ENCODE measurements at regions of chr19 and their contacts with region 1.

Region 1: DNA sequence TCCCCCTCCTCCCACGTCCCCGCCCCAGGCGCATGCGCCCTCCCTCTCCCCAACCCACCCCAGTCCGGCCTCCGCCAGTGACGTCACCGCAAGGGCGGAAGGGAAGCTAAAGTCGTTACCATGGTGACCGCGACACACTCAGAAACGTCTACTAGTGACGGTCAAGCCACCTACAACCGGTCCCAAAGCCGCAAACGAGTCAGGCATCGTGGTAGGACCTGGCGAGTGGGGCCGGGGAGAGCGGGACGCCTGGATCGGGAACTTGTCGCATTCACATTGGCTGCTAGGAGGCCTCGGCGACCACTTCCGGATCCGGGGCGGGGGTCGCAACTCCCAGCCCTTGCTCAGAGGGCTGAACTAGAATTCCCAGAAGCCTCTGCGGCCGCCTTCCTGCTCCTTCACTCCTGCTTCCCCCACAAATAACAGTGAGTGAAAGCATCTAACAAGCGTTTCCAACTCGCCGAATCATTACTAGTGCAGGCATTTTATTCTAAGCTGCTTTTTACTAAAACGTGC is at the start of gene ZSCAN5A:
- DNase-seq: peak; percentile 98
- H3K4me3 Mint-ChIP-seq: peak within 1 kb of the TSS; percentile 91
- H3K27ac Mint-ChIP-seq: peak within 1 kb of the TSS; percentile 97
- H3K4me1 Mint-ChIP-seq: peaks cover 23% of the 10 kb centered on the region
- H3K27me3 Mint-ChIP-seq: no peaks in the 10 kb centered on the region
- total RNA-seq, gene ZSCAN5A: 4.5 to 5.2 TPM

Region 2: DNA sequence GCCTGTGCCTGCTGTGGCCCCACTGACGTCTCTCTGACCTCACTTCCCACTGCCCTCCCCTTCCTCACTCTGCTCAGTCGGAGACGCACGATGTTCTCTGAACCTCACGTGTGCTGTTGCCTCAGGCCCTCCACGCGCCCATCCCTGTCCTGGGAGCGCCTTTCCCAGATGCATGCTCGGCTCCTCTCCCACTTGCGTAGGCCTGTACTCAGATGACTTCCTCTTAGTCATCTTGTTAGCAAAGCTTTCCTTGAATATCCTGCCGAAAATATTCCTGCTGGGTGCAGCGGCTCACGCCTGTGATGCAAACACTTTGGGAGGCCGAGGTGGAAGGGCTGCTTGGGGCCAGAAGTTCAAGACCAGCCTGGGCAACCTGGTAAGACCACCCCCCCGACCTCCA is 1125.2 kb before region 1 on chr19:
- CTCF ChIA-PET with region 1: no interaction called
- POLR2A ChIA-PET with region 1: no interaction called
- intact Hi-C with region 1: no loop called
- DNase-seq: no peak
- H3K4me3 Mint-ChIP-seq: no peak overlapping the region
- H3K27ac Mint-ChIP-seq: no peak overlapping the region
- H3K4me1 Mint-ChIP-seq: no peaks in the 10 kb centered on the region
- H3K27me3 Mint-ChIP-seq: peaks cover 11% of the 10 kb centered on the region

Region 3: GRCh38 chr19:56121180-56122167 is 193.1 kb before region 1 on chr19 and contains the start of gene ZNF787:
- CTCF ChIA-PET with region 1: no interaction called
- POLR2A ChIA-PET with region 1: interaction called, 9 read pairs
- intact Hi-C with region 1: loop called (anchors 1 kb)
- DNase-seq: peak; percentile 97
- H3K4me3 Mint-ChIP-seq: peak within 1 kb of the TSS; percentile 85
- H3K27ac Mint-ChIP-seq: peak within 1 kb of the TSS; percentile 91
- H3K4me1 Mint-ChIP-seq: peaks cover 39% of the 10 kb centered on the region
- H3K27me3 Mint-ChIP-seq: no peaks in the 10 kb centered on the region
- total RNA-seq, gene ZNF787: 25.3 to 25.5 TPM

Region 4: GRCh38 chr19:56252699-56253422 is 61.8 kb before region 1 on chr19:
- CTCF ChIA-PET with region 1: interaction called, 21 read pairs
- POLR2A ChIA-PET with region 1: no interaction called
- intact Hi-C with region 1: no loop called
- DNase-seq: peak; percentile 83
- H3K4me3 Mint-ChIP-seq: no peak overlapping the region
- H3K27ac Mint-ChIP-seq: no peak overlapping the region
- H3K4me1 Mint-ChIP-seq: peaks cover 5% of the 10 kb centered on the region
- H3K27me3 Mint-ChIP-seq: no peaks in the 10 kb centered on the region

Region 5: GRCh38 chr19:56333505-56333904 is 18.9 kb after region 1 on chr19:
- CTCF ChIA-PET with region 1: interaction called, 16 read pairs
- POLR2A ChIA-PET with region 1: no interaction called
- intact Hi-C with region 1: no loop called
- DNase-seq: peak; percentile 34
- H3K4me3 Mint-ChIP-seq: no peak overlapping the region
- H3K27ac Mint-ChIP-seq: no peak overlapping the region
- H3K4me1 Mint-ChIP-seq: no peaks in the 10 kb centered on the region
- H3K27me3 Mint-ChIP-seq: peaks cover 5% of the 10 kb centered on the region

Region 6: DNA sequence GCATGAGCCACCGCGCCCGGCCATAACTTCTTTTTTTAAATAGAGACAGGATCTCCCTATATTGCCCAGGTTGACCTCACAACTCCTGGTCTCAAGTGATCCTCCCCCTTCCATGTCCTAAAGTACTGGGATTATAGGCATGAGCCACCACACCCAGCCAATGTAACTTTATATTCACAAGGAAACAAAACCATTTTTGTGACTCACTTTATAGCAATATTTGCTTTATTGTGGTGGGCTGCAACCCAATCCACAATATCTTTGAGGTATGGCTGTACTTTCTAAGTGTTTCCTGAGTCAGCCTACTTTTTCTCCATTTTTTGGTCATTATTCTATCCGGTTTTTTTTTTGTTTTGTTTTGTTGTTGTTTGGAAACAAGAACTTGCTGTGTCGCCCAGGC is 838.3 kb after region 1 on chr19:
- CTCF ChIA-PET with region 1: no interaction called
- POLR2A ChIA-PET with region 1: no interaction called
- intact Hi-C with region 1: no loop called
- DNase-seq: no peak
- H3K4me3 Mint-ChIP-seq: no peak overlapping the region
- H3K27ac Mint-ChIP-seq: no peak overlapping the region
- H3K4me1 Mint-ChIP-seq: no peaks in the 10 kb centered on the region
- H3K27me3 Mint-ChIP-seq: no peaks in the 10 kb centered on the region

Region 7: DNA sequence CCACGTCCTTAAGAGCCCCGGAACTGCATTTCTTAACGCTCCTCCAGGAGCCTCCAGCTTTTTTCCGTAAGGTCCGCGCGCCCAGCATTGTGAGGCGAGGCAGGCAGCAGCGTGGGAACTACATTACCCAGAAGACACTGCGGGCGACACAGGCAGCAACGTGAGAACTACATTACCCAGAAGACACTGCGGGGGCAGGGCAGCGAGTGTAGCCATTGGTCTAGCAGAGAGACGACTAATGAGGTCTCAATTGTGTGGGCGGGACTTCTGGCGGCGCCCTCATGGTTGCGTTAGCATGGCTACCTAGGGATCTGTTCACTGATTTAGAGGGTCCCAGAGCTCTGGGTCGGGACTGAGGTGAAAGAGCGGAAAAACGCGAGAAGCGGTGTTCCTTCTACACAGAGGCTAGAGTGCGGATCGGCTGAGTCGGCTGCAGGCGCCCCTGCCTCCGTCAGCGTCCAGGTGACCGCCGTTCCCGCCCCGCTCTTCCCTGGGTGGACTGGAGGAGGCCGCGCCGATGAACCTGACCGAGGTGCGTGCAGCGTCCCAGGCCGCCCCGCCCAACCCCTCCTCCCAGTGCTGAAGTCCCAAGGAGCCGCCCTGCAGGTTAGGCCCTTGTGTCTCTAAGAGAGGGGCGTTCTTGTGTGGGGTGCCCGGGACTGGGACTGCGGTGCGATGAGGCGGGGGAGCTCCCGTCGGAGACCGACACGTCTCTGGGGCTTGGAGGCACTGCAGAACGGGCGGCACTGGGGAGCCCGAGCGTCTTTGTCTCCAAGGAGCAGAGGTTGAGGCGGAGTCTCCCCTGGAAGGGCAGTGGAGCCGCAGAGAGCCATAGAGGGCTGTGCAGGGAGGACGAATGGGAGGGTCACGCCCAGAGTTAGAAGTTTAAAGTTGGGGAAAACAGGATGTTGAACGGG is 1120.7 kb after region 1 on chr19 and contains the start of gene ZNF749:
- CTCF ChIA-PET with region 1: no interaction called
- POLR2A ChIA-PET with region 1: no interaction called
- intact Hi-C with region 1: loop called (anchors 5 kb)
- DNase-seq: peak; percentile 97
- H3K4me3 Mint-ChIP-seq: peak within 1 kb of the TSS; percentile 93
- H3K27ac Mint-ChIP-seq: peak within 1 kb of the TSS; percentile 85
- H3K4me1 Mint-ChIP-seq: peaks cover 24% of the 10 kb centered on the region
- H3K27me3 Mint-ChIP-seq: no peaks in the 10 kb centered on the region
- total RNA-seq, gene ZNF749: 9.3 to 9.4 TPM